Common myeloid progenitor, CD34-positive (primary cell): ENCODE measurements at regions of chr15 and their contacts with region 1.

Region 1: DNA sequence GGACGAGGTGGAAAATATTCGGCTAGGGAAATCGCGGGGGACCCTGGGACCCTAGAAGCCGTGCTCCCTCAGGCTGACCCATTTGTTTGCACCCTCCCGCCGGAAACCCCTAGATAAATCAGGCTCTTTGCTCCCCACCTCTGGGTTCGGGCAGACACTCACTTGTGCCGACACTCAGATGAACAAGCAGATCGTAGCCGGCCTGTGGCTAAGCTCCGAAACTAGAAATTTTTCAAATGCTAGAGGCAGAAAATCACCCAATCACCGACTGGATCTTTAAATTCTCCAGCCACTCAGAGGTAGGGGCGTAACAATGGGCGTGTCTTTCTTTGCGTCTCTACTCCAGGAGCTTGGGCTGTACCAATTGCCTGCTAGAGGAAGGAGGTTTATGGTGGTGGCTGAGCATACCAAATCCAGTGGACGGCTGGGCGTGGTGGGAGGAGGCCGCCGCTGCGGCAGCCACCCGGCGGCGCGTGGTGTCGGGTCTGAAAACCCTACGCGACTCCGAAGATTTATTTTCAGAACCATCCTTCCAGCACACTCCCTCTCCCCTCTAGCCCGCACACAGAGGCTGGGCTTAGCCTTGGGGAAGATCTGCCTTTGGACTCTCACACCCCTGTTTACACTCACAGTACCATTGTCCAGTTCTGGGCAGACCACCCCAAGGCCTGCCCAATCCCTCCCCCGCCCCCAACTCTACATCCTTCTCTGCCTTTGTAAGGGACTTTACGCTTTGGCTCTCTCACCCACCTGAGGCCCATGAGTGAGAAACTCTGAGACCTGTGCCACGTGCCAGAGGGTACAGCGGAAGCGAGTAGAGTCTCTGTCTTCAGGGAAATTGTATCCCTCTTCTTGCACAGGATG is at the start of gene PIF1:
- DNase-seq: peak; percentile 98 to 99 (median 99)
- H3K4me3 ChIP-seq: peak within 1 kb of the TSS in 6 of 7 experiments; percentile 58 to 93 (median 68)
- H3K27ac ChIP-seq: peak within 1 kb of the TSS in 1 of 2 experiments; percentile 40
- H3K4me1 ChIP-seq: peaks cover 2 to 30% (median 27%) of the 10 kb centered on the region in 4 experiments
- H3K27me3 ChIP-seq: peaks cover 0 to 27% (median 5%) of the 10 kb centered on the region in 5 experiments

Region 2: GRCh38 chr15:64792282-64792681 is 33.4 kb before region 1 on chr15:
- CTCF ChIA-PET with region 1: no interaction called
- POLR2A ChIA-PET with region 1: no interaction called
- DNase-seq: no peak
- H3K4me3 ChIP-seq: no peak overlapping the region
- H3K27ac ChIP-seq: no peak overlapping the region
- H3K4me1 ChIP-seq: no peaks in the 10 kb centered on the region
- H3K27me3 ChIP-seq: no peaks in the 10 kb centered on the region

Region 3: GRCh38 chr15:64803526-64803925 is 22.1 kb before region 1 on chr15:
- CTCF ChIA-PET with region 1: interaction called, 34 read pairs
- POLR2A ChIA-PET with region 1: no interaction called
- DNase-seq: no peak
- H3K4me3 ChIP-seq: no peak overlapping the region
- H3K27ac ChIP-seq: no peak overlapping the region
- H3K4me1 ChIP-seq: no peaks in the 10 kb centered on the region
- H3K27me3 ChIP-seq: no peaks in the 10 kb centered on the region

Region 4: DNA sequence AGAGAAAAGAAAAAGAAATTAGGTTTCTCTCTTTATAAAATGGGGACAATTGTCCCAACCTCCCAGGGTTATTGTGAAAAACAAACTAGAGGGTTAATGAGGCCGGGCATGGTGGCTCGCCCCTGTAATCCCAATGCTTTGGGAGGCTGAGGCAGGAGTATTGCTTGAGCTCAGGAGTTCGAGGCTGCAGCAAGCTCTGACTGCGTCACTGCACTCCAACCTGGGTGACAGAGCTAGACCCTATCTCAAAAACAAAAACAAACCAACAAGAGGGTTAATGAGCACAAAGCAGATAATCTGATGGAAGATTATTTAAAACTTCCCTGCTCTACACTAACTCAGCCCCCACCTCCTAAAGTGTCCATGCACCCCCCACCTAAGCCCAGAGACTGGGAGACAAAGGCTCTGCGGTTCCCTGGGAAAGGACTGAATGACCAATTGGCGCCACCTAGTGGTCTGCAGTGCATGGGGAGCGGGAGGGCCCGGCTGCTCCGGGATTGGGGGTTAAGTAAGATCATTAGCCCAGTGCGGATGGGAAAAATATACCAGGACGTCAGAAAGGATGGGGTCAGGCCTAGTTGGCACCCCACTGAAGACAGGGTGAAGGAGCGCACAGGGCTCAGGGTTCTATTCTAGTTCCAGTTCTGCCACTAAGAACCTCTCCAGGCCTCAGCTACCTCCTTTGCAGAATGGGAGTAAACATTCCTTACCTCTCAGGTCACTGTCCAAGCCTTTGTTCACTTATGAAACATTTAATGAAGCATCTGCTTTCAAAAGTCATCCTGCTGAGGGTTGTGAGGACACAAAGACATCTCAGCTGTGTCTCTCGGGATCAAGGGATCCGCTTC is 15.8 kb before region 1 on chr15:
- CTCF ChIA-PET with region 1: interaction called, 34 read pairs
- POLR2A ChIA-PET with region 1: interaction called, 3 read pairs
- DNase-seq: peak; percentile 61 to 65 (median 64)
- H3K4me3 ChIP-seq: no peak overlapping the region
- H3K27ac ChIP-seq: no peak overlapping the region
- H3K4me1 ChIP-seq: peaks cover 0 to 9% (median 2%) of the 10 kb centered on the region in 4 experiments
- H3K27me3 ChIP-seq: peaks cover 0 to 3% (median 0%) of the 10 kb centered on the region in 5 experiments

Region 5: DNA sequence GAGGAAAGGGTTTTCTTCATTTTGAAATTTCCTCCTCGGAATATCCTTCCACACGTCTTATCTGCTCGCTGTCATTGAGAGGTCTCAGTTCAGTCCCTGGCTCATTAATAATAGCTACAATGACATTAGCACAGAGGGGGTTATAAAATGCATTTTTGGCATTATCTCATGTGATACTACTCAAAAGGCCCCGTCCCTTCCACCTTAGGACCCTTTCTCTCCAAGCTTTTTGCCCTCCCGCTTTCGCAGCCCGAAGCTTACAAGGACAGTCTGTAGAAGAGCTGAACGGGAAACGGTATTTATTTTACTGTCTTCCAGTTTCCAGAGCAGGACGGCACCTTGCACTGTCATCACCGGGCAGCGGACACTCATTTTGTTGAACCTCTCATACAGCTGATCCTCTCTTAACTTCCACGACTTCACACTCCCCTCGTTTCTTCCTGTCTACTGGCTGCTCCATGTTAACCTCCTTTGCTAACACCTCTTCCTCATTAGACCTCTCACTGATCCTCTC is 10.4 kb after region 1 on chr15:
- CTCF ChIA-PET with region 1: interaction called, 10 read pairs
- POLR2A ChIA-PET with region 1: interaction called, 3 read pairs
- DNase-seq: no peak
- H3K4me3 ChIP-seq: peak overlapping the region in 3 of 7 experiments; percentile 29 to 42 (median 40)
- H3K27ac ChIP-seq: peak overlapping the region in 1 of 2 experiments; percentile 25
- H3K4me1 ChIP-seq: peaks cover 7 to 51% (median 24%) of the 10 kb centered on the region in 4 experiments
- H3K27me3 ChIP-seq: no peaks in the 10 kb centered on the region